Right ventricle myocardium inferior (tissue), 1 donor: ENCODE measurements at regions of chr2 and their contacts with region 1.

Region 1: GRCh38 chr2:219430633-219431615 is 3.7 kb upstream of the SPEG start:
- DNase-seq: no peak
- ATAC-seq: peak; percentile 80

Region 2: DNA sequence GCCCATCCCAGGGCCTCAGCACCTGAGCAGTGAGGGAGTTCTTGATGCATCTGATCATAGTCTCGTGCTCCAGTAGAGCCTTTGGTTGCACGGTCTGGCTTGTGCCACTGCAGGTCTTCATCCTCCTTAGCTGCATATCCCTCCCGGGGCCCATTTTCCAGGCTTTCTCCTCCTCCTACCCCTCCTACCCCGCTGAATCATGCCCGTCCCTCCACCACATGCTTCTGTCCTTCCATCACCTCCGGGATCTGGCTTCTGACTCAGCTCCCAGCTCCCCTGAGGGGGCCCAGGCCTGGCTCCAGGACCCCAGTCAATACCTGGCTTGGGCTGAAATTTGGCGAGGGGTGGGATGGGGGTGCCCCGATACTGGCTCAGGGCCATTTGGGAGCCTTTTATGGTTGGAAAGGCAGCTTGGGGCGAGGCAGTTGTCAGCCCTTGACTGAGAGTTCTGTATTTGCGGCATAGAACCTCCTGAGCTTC is 22.0 kb after region 1 on chr2:
- intact Hi-C with region 1: loop called (anchors 2 kb)
- DNase-seq: no peak
- ATAC-seq: peak; percentile 63